PC-9 (cell line): ENCODE measurements at regions of chr3 and their contacts with region 1.

Region 1: DNA sequence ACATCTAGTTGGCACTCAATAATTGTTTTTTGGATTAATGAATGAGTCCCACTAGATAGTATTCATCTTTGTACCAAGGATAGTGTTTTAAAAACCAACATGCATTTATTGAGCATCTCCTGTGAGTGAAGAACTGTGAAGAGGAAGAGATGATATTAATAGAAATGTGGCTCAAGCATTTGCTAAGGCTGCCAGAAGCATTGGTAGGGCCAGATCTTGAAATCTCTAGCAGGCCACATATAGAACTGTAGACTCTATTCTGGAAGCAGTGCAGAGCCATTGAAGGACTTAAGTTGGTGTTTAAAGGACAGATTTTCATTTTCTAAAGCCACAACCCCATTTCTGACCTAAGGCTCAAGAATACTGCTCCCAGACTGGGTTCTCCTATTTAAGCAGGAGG is 99.0 kb downstream of the NEK11 start:
- DNase-seq: no peak
- H3K4me3 ChIP-seq: no peak overlapping the region
- H3K27ac ChIP-seq: no peak overlapping the region
- H3K4me1 ChIP-seq: no peaks in the 10 kb centered on the region
- H3K27me3 ChIP-seq: no peaks in the 10 kb centered on the region
- CTCF ChIP-seq: no peak

Region 2: DNA sequence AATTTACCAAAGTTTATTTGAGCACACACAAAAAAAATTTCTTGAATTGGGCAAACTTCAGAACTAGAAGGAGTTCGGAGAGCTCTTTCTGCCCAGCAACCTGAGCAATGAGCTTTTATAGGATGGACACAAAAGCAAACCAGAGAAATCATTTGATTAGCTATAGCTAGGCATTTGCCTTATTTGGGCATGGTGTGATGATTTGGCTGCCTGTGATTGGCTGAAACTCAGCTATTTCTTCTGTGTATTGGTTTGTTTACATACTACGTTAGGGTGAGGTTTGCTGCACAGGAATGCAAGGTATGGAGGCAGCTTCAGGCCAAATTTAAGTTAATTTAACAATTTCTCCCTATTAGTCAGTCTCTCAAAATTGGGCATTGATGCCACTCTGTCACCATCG is 33.9 kb before region 1 on chr3:
- CTCF ChIA-PET with region 1: no interaction called
- POLR2A ChIA-PET with region 1: interaction called, 13 read pairs
- intact Hi-C with region 1: no loop called
- DNase-seq: peak in 1 of 2 experiments; percentile 80
- H3K4me3 ChIP-seq: no peak overlapping the region
- H3K27ac ChIP-seq: no peak overlapping the region
- H3K4me1 ChIP-seq: peaks cover 7% of the 10 kb centered on the region; the same call in 1 of the 2 replicates
- H3K27me3 ChIP-seq: no peaks in the 10 kb centered on the region
- CTCF ChIP-seq: no peak